SK-N-SH (cell line): ENCODE measurements at regions of chr15 and their contacts with region 1.

Region 1: DNA sequence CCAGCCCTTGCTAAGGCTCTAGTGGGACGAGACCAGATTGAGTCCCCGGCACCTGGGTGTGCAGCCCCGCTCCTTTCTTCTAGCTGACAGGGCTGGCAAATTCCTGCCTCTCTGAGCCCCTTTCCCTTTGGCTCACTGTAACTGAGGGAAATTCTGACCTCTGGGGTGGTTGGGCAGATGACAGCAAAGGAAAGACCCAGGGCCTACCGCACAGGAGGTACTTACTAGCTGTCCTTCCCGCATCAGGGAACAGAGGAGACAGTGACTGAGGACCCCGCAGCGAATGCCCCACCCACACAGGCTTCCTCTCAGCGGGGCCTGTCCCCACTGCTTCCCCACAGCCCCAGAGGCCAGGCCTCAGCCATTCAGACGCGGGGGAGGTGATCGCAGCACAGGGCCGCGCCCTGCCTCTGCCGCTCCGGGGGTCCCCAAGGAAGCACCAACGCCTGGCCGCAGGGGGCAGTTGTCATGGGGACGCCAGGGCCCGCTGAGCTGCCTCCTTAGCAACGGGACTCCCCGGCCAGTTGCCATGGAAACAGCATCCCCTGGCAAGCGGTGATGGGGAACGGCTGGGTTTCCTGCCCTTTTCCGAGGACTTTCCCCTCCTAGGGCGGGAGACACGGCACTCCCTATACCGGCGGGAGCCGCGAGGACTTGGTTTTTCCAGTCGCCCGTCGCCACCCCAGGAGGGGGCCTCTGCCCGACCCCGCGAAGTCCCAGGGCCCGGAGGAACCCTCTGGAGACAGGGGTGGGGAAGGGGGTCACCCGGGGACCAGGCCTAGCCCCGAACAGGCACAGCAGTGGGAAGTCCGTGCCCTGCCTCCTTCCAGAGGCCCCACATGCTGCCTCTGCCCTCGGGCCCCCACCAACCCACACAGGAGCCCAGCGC is 50.1 kb downstream of the HCN4 start:
- DNase-seq: peak; percentile 92
- H3K4me3 ChIP-seq: peak overlapping the region in 1 of 2 experiments; percentile 6; a peak in 1 of 4 replicates
- H3K27ac ChIP-seq: no peak overlapping the region
- H3K4me1 ChIP-seq: peaks cover 0 to 2% of the 10 kb centered on the region in 2 experiments; a peak in 1 of 4 replicates
- H3K27me3 ChIP-seq: no peaks in the 10 kb centered on the region
- CTCF ChIP-seq: no peak
- EP300 ChIP-seq: no peak
- RAD21 ChIP-seq: no peak

Region 2: GRCh38 chr15:73305331-73306211 is 13.1 kb before region 1 on chr15:
- CTCF ChIA-PET with region 1: interaction called, 13 read pairs
- POLR2A ChIA-PET with region 1: no interaction called
- DNase-seq: peak; percentile 79
- H3K4me3 ChIP-seq: no peak overlapping the region; a peak in 1 of 4 replicates
- H3K27ac ChIP-seq: no peak overlapping the region; a peak in 1 of 4 replicates
- H3K4me1 ChIP-seq: peaks cover 0 to 8% of the 10 kb centered on the region in 2 experiments; a peak in 1 of 4 replicates
- H3K27me3 ChIP-seq: no peaks in the 10 kb centered on the region
- CTCF ChIP-seq: peak; percentile 62
- EP300 ChIP-seq: no peak
- RAD21 ChIP-seq: peak; percentile 90